Prostate gland (tissue), 2 donors: ENCODE measurements at regions of chr7 and their contacts with region 1.

Region 1: GRCh38 chr7:44885394-44886317 is at the start of gene PURB:
- DNase-seq: peak; percentile 94
- H3K4me3 ChIP-seq: peak within 1 kb of the TSS; percentile 87 to 93
- H3K27ac ChIP-seq: peak within 1 kb of the TSS; percentile 93 to 94
- H3K4me1 ChIP-seq: peaks cover 21% of the 10 kb centered on the region
- H3K27me3 ChIP-seq: no peaks in the 10 kb centered on the region
- CTCF ChIP-seq: peak in 1 of 4 experiments; percentile 21
- POLR2A ChIP-seq: peak; percentile 89
- total RNA-seq, gene PURB: 21.9 to 22.0 TPM

Region 2: GRCh38 chr7:44750921-44751571 is 134.6 kb before region 1 on chr7:
- intact Hi-C with region 1: no loop called
- DNase-seq: no peak
- H3K4me3 ChIP-seq: no peak overlapping the region
- H3K27ac ChIP-seq: no peak overlapping the region
- H3K4me1 ChIP-seq: peaks cover 7% of the 10 kb centered on the region
- H3K27me3 ChIP-seq: no peaks in the 10 kb centered on the region
- CTCF ChIP-seq: no peak
- POLR2A ChIP-seq: no peak

Region 3: GRCh38 chr7:44986218-44987053 is 100.8 kb after region 1 on chr7:
- intact Hi-C with region 1: loop called (anchors 5 kb)
- DNase-seq: peak; percentile 88
- H3K4me3 ChIP-seq: peak overlapping the region; percentile 40 to 52
- H3K27ac ChIP-seq: peak overlapping the region; percentile 92
- H3K4me1 ChIP-seq: peaks cover 4% of the 10 kb centered on the region
- H3K27me3 ChIP-seq: no peaks in the 10 kb centered on the region
- CTCF ChIP-seq: no peak
- POLR2A ChIP-seq: peak; percentile 91